HEK293 (cell line): ENCODE measurements at regions of chr17 and their contacts with region 1.

Region 1: GRCh38 chr17:75601057-75602051 is 13.8 kb downstream of the MYO15B start:
- H3K4me3 ChIP-seq: no peak overlapping the region
- H3K27ac ChIP-seq: no peak overlapping the region
- H3K4me1 ChIP-seq: no peaks in the 10 kb centered on the region
- CTCF ChIP-seq: peak; percentile 86

Region 2: GRCh38 chr17:75524953-75525719 is 76.2 kb before region 1 on chr17 and contains the start of gene LLGL2:
- CTCF ChIA-PET with region 1: interaction called, 11 read pairs
- POLR2A ChIA-PET with region 1: no interaction called
- H3K4me3 ChIP-seq: peak within 1 kb of the TSS; percentile 55
- H3K27ac ChIP-seq: peak within 1 kb of the TSS; percentile 61
- H3K4me1 ChIP-seq: peaks cover 5% of the 10 kb centered on the region
- CTCF ChIP-seq: peak; percentile 96

Region 3: GRCh38 chr17:75589012-75589918 is 12.1 kb before region 1 on chr17:
- CTCF ChIA-PET with region 1: interaction called, 58 read pairs
- POLR2A ChIA-PET with region 1: interaction called, 9 read pairs
- H3K4me3 ChIP-seq: peak overlapping the region; percentile 48
- H3K27ac ChIP-seq: peak overlapping the region; percentile 60; the same call in 1 of the 2 replicates
- H3K4me1 ChIP-seq: peaks cover 2% of the 10 kb centered on the region; the same call in 1 of the 2 replicates
- CTCF ChIP-seq: peak; percentile 58

Region 4: DNA sequence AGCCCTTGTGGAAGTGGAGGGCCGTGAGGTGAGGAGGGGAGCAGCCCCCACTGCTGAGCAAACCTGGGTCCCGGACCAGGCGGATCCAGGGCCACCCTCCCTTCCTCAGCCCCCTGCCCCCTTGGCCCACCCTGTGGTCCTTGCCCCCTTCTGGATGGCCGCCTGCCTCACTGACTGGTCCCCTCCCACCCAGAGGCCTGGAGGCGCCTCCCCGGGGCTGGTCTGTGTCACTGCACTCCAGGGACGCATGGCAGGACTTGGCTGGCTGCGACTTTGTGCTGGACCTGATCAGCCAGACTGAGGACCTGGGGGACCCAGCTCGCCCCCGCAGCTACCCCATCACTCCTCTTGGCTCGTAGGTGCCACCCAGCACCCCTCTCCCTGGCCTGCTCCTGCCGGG is 12.7 kb after region 1 on chr17:
- CTCF ChIA-PET with region 1: interaction called, 102 read pairs
- POLR2A ChIA-PET with region 1: interaction called, 5 read pairs
- H3K4me3 ChIP-seq: no peak overlapping the region
- H3K27ac ChIP-seq: no peak overlapping the region
- H3K4me1 ChIP-seq: no peaks in the 10 kb centered on the region
- CTCF ChIP-seq: no peak

Region 5: GRCh38 chr17:75625813-75626486 is 24.6 kb after region 1 on chr17:
- CTCF ChIA-PET with region 1: interaction called, 35 read pairs
- POLR2A ChIA-PET with region 1: no interaction called
- H3K4me3 ChIP-seq: no peak overlapping the region
- H3K27ac ChIP-seq: no peak overlapping the region
- H3K4me1 ChIP-seq: no peaks in the 10 kb centered on the region
- CTCF ChIP-seq: peak; percentile 88

Region 6: DNA sequence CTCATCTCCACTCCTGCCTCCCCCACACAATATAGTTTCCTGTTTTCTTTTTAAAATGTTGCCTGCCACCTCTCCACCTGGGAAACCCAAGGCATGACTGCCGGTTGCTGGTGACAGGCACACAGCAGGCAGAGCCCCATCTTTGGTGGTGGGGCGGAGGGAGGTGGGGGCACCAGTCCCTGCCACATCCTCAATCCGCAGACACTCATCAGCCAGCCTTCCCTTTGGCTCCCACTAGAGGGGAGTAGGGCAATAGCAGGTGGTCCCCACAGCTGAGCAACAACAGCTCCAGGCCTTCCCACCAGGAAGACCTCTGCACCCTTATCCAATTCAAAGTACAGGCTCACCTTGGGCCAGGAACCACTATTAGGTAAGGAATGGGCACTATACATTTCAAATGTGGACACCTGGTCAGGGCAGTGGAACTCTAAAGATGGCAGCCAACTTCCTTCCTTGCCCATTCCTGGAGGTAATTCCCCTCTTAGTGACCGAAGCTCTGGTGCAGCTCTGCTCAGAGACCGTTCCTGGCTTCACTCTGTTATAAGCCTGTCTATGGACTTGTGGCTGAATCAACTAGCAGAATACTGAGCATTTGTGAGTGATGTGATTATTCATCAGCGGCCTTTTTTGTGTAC is 51.7 kb after region 1 on chr17:
- CTCF ChIA-PET with region 1: interaction called, 13 read pairs
- POLR2A ChIA-PET with region 1: no interaction called
- H3K4me3 ChIP-seq: no peak overlapping the region
- H3K27ac ChIP-seq: no peak overlapping the region
- H3K4me1 ChIP-seq: no peaks in the 10 kb centered on the region
- CTCF ChIP-seq: peak; percentile 71

Region 7: DNA sequence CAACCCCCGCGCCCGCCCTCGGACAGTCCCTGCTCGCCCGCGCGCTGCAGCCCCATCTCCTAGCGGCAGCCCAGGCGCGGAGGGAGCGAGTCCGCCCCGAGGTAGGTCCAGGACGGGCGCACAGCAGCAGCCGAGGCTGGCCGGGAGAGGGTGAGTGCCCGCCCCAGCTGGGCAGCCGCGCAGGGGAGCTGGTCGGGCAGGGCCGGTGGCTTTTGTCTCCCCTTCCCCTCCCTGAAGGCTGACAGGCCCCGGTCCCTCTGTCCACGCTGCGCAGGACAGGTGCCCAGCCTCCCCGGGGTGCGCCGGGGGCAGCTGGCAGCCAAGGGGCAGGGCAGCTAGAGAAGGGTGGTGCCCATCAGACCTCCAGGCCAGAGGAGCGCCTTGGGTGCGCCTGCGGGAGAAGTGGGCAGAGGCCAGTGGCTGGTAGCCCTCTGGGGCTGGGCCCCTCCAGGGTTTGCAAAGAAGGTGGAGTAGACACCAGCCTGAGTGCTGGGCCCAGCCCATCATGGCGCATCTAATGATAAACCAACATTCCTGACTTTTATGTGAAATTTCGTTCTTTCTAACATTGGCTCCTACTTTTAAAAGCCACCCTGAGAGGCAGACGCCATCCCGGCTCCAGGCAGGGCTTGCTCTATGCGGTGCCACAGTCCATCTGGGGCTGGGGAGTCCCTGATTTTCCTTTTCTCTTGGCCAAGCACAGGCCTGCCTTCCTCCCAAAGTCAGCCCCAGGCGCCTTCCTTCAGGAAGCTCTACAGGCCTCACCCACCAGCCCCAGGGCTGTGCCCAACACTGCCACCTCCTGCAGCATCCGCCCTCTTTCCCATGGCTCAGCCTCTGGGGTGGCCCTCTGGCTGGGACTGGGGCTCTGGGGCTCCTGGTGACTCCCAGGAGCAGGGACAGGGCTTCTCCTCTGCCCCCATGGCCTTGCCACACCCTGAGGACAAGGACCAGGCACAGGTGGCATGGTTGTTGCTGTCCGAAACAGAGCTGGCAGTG is 120.4 kb after region 1 on chr17:
- CTCF ChIA-PET with region 1: no interaction called
- POLR2A ChIA-PET with region 1: no interaction called
- H3K4me3 ChIP-seq: peak overlapping the region; percentile 35
- H3K27ac ChIP-seq: no peak overlapping the region
- H3K4me1 ChIP-seq: no peaks in the 10 kb centered on the region; the same call in 1 of the 2 replicates
- CTCF ChIP-seq: no peak